Endothelial cell of umbilical vein (primary cell): ENCODE measurements at regions of chr7 and their contacts with region 1.

Region 1: GRCh38 chr7:26200444-26201246 is at the start of gene HNRNPA2B1:
- DNase-seq: peak; percentile 99
- H3K4me3 ChIP-seq: peak within 1 kb of the TSS; percentile 98 to 100 (median 98)
- H3K27ac ChIP-seq: peak within 1 kb of the TSS; percentile 97
- H3K4me1 ChIP-seq: peaks cover 40% of the 10 kb centered on the region
- H3K27me3 ChIP-seq: no peaks in the 10 kb centered on the region
- CTCF ChIP-seq: no peak
- POLR2A ChIP-seq: peak; percentile 100
- total RNA-seq, gene HNRNPA2B1: 703 and 717 TPM in 2 replicates

Region 2: GRCh38 chr7:25862260-25863037 is 338.2 kb before region 1 on chr7:
- CTCF ChIA-PET with region 1: no interaction called
- POLR2A ChIA-PET with region 1: interaction called, 4 read pairs
- dilution Hi-C with region 1: no loop called
- intact Hi-C with region 1: loop called (anchors 1 kb)
- DNase-seq: peak; percentile 100
- H3K4me3 ChIP-seq: peak overlapping the region in 1 of 3 experiments; percentile 43
- H3K27ac ChIP-seq: no peak overlapping the region
- H3K4me1 ChIP-seq: peaks cover 6% of the 10 kb centered on the region
- H3K27me3 ChIP-seq: peaks cover 60 to 83% of the 10 kb centered on the region in 2 experiments
- CTCF ChIP-seq: no peak
- POLR2A ChIP-seq: no peak

Region 3: GRCh38 chr7:26187380-26188205 is 13.1 kb before region 1 on chr7:
- CTCF ChIA-PET with region 1: interaction called, 13 read pairs
- POLR2A ChIA-PET with region 1: interaction called, 15 read pairs
- dilution Hi-C with region 1: no loop called
- intact Hi-C with region 1: no loop called
- DNase-seq: no peak
- H3K4me3 ChIP-seq: no peak overlapping the region
- H3K27ac ChIP-seq: no peak overlapping the region
- H3K4me1 ChIP-seq: peaks cover 4% of the 10 kb centered on the region
- H3K27me3 ChIP-seq: no peaks in the 10 kb centered on the region
- CTCF ChIP-seq: no peak
- POLR2A ChIP-seq: peak; percentile 70